ENCODE measurements at regions of chr2 and their contacts with region 1.

Region 1: GRCh38 chr2:134411828-134412638 is 158.2 kb downstream of the MGAT5 start:
- DNase-seq: no peak
- H3K4me3 ChIP-seq: no peak overlapping the region
- H3K27me3 ChIP-seq: no peaks in the 10 kb centered on the region
- CTCF ChIP-seq: peak; percentile 88

Region 2: GRCh38 chr2:133886735-133887660 is 525.0 kb before region 1 on chr2:
- CTCF ChIA-PET with region 1: interaction called, 48 read pairs
- POLR2A ChIA-PET with region 1: no interaction called
- DNase-seq: peak; percentile 94
- H3K4me3 ChIP-seq: no peak overlapping the region
- H3K27me3 ChIP-seq: peaks cover 4% of the 10 kb centered on the region; the same call in 1 of the 2 replicates
- CTCF ChIP-seq: peak; percentile 65

Region 3: DNA sequence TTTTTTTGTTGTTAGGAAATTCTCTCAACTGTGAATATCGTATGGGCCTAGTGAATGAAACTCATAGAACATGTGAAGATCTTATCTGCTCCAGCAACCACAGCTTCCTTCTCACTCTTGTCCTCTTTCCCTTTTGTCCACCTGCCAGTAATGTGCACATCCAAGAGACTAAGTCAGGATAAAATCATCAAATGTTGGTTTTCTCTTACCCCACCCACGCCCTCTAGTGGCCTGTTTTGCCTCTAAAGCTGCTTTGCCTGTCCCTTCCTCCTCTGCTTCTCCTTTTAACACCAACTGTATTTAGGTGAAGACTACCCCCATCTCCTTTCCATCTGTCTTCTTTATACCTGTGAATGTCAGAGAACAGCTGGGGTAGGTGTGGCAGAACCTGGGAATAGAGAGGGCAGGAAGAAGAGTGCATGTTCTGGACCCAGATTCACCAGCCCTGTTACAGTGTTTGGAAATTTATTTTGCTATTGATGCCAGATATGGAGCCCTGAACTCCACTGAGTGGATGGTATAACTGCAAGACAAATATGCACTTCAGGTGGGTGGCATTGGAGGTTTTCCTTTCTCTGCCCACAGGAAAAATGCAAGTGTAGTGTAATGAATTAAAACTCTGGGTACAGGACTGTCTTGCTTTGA is 166.6 kb before region 1 on chr2:
- CTCF ChIA-PET with region 1: interaction called, 33 read pairs
- POLR2A ChIA-PET with region 1: interaction called, 3 read pairs
- DNase-seq: no peak
- H3K4me3 ChIP-seq: no peak overlapping the region
- H3K27me3 ChIP-seq: no peaks in the 10 kb centered on the region
- CTCF ChIP-seq: peak; percentile 87

Region 4: GRCh38 chr2:134260713-134261112 is 151.3 kb before region 1 on chr2:
- CTCF ChIA-PET with region 1: interaction called, 4 read pairs
- POLR2A ChIA-PET with region 1: interaction called, 11 read pairs
- DNase-seq: peak; percentile 73
- H3K4me3 ChIP-seq: no peak overlapping the region
- H3K27me3 ChIP-seq: no peaks in the 10 kb centered on the region
- CTCF ChIP-seq: no peak

Region 5: DNA sequence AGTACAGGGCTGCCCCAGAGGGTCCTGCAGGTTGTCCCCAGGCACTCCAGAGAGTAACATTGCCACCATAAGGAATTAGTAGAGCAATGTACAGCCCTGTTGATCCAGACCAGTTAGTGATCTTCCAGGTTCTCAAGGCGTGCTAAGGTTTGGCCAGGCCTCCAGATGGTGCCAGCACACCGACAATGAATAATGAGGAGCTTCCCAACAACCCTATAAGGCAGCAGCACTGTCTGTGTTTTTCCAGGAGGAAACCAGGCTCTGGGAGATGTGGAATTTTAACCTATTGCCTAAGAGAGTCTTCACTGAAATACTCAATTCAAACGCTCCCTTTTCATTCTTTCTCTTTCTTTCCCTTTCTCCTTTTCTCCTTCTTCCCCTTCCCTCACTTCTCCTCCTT is 36.1 kb before region 1 on chr2:
- CTCF ChIA-PET with region 1: interaction called, 19 read pairs
- POLR2A ChIA-PET with region 1: no interaction called
- DNase-seq: no peak
- H3K4me3 ChIP-seq: no peak overlapping the region
- H3K27me3 ChIP-seq: no peaks in the 10 kb centered on the region
- CTCF ChIP-seq: peak; percentile 31; the same call in 1 of the 2 replicates

Region 6: DNA sequence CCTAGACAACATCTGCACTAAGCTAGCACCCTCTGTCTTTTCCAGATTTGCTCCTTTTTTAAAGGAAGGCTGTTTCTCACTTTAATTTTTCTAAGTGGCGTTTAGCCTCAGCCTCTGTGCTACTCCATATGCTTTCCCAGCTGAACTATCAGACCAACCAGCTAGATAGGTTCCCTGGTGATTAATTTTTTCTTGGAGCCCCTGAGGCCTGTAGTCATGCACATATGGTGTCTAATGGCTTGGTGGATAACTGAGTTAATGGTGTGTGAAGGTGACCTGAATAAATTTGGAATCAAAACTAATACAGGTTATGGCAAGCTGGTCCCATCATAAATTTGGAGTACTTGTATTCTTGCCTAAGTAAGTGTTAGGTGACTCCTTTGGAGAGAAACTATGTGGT is 22.7 kb before region 1 on chr2:
- CTCF ChIA-PET with region 1: interaction called, 42 read pairs
- POLR2A ChIA-PET with region 1: no interaction called
- DNase-seq: no peak
- H3K4me3 ChIP-seq: no peak overlapping the region
- H3K27me3 ChIP-seq: no peaks in the 10 kb centered on the region
- CTCF ChIP-seq: no peak

Region 7: DNA sequence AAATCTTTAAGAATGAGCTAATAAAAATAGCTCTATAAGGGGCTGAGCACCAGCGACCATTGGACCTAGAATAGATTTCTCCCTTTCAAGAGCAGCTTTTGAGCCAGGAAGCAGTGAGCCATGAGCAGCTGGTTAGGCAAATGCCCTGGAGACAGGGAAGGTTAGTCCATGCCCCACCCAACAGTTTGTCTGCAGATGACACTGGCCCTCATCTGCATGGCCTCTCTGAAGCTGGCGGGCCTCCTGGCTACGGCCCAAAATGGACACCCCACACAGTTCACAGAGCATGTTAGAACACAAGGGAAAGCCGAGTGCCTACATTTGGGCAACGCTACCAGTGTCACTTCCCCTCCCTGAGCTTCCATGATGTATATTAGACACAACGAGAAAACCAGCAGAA is 42.9 kb after region 1 on chr2:
- CTCF ChIA-PET with region 1: interaction called, 24 read pairs
- POLR2A ChIA-PET with region 1: no interaction called
- DNase-seq: no peak
- H3K4me3 ChIP-seq: no peak overlapping the region
- H3K27me3 ChIP-seq: no peaks in the 10 kb centered on the region
- CTCF ChIP-seq: no peak

Region 8: DNA sequence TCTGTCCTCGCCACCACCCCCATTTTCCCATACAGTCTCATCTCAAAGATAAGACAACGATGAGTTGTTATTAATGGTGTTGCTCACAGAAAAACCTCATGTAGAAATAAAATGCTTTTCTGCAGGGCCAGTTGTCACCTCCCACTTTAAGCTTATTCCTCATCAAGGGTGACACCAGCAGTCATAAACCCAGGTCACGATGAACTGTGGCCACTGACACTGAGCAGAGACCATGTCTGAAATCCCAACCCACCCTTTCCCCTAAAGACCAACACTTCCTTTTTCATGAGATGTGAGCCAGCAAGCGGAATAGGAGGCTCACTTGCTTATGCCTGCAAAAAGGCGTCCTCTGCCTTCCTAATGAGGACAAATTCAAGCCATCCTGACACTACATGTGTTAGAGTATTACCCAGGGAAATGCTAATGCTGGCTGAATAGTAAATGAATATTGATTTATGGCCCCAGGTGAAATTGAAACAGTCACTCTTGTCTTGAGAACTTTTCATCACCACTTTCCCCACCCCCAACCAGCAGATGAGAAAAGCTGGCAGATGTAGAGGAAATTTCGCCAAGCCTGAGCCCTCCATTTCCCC is 70.2 kb after region 1 on chr2:
- CTCF ChIA-PET with region 1: no interaction called
- POLR2A ChIA-PET with region 1: no interaction called
- DNase-seq: no peak
- H3K4me3 ChIP-seq: no peak overlapping the region
- H3K27me3 ChIP-seq: peaks cover 1% of the 10 kb centered on the region
- CTCF ChIP-seq: no peak

Region 9: GRCh38 chr2:134917360-134917865 is 505.4 kb after region 1 on chr2:
- CTCF ChIA-PET with region 1: no interaction called
- POLR2A ChIA-PET with region 1: no interaction called
- DNase-seq: no peak
- H3K4me3 ChIP-seq: peak overlapping the region; percentile 100
- H3K27me3 ChIP-seq: no peaks in the 10 kb centered on the region
- CTCF ChIP-seq: no peak

Region 10: GRCh38 chr2:135198481-135198880 is 786.4 kb after region 1 on chr2:
- CTCF ChIA-PET with region 1: no interaction called
- POLR2A ChIA-PET with region 1: no interaction called
- DNase-seq: no peak
- H3K4me3 ChIP-seq: no peak overlapping the region
- H3K27me3 ChIP-seq: no peaks in the 10 kb centered on the region
- CTCF ChIP-seq: no peak